Caco-2 (cell line): ENCODE measurements at regions of chr3 and their contacts with region 1.

Region 1: DNA sequence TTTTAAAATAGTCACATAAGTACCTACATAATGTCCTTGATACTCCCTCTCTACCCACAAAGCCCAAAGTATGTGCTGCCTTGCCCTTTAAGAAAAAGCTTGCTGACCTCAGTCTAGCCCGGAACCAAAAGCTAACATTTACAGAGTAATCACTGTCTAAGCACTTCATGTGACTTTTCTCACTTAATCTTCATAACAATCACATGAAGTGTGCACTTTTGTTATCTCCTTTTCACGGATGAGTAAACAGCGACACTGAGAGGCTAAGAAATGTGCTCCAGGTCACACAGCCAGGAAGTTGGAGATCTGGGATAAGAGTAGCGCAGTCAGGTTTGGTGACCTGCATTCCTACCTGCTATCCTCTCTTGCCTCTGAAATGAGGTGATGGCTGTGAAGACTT is 194.0 kb downstream of the ITPR1 start:
- DNase-seq: peak; percentile 42 to 52
- H3K4me3 ChIP-seq: no peak overlapping the region
- H3K4me3 Mint-ChIP-seq: no peak overlapping the region
- H3K27ac Mint-ChIP-seq: no peak overlapping the region
- H3K4me1 ChIP-seq: 0 out of 2 replicates have a peak, but pooled peaks cover 5% of the 10 kb centered on the region
- H3K4me1 Mint-ChIP-seq: peaks cover 7% of the 10 kb centered on the region
- H3K27me3 ChIP-seq: no peaks in the 10 kb centered on the region; the same call in 1 of the 2 replicates
- H3K27me3 Mint-ChIP-seq: no peaks in the 10 kb centered on the region
- CTCF ChIP-seq: no peak

Region 2: GRCh38 chr3:4303187-4304123 is 383.7 kb before region 1 on chr3 and contains the start of gene SETMAR:
- CTCF ChIA-PET with region 1: no interaction called
- POLR2A ChIA-PET with region 1: no interaction called
- intact Hi-C with region 1: no loop called
- DNase-seq: peak; percentile 86 to 89
- H3K4me3 ChIP-seq: peak within 1 kb of the TSS; percentile 81
- H3K4me3 Mint-ChIP-seq: peak within 1 kb of the TSS; percentile 94
- H3K27ac Mint-ChIP-seq: peak within 1 kb of the TSS; percentile 95
- H3K4me1 ChIP-seq: peaks cover 17% of the 10 kb centered on the region
- H3K4me1 Mint-ChIP-seq: peaks cover 16% of the 10 kb centered on the region
- H3K27me3 ChIP-seq: no peaks in the 10 kb centered on the region
- H3K27me3 Mint-ChIP-seq: no peaks in the 10 kb centered on the region
- CTCF ChIP-seq: no peak
- total RNA-seq, gene SETMAR: 11.7 and 11.8 TPM in 2 replicates

Region 3: GRCh38 chr3:4644951-4645350 is 42.2 kb before region 1 on chr3:
- CTCF ChIA-PET with region 1: no interaction called
- POLR2A ChIA-PET with region 1: no interaction called
- intact Hi-C with region 1: no loop called
- DNase-seq: no peak
- H3K4me3 ChIP-seq: no peak overlapping the region
- H3K4me3 Mint-ChIP-seq: no peak overlapping the region
- H3K27ac Mint-ChIP-seq: no peak overlapping the region
- H3K4me1 ChIP-seq: no peaks in the 10 kb centered on the region
- H3K4me1 Mint-ChIP-seq: no peaks in the 10 kb centered on the region
- H3K27me3 ChIP-seq: no peaks in the 10 kb centered on the region
- H3K27me3 Mint-ChIP-seq: no peaks in the 10 kb centered on the region
- CTCF ChIP-seq: no peak

Region 4: DNA sequence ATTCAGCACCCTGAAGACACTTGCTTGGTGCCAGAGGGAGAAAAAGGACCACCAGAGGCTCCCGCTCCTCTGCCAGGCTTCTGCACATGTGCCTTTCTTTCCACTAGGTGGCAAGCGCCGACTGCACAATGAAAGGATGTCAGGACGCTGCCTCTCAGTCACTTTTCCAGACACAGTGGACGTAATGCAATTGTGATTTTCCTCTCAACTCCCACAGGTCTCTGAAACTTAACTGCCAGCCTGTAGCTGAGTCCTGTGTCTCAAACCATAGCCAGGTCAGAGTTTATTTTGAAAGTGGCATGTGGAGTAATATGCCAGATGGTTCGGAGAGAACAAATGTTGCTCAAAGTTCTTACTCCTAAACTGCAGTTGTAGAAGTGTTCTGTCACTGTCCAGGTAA is 31.1 kb before region 1 on chr3:
- CTCF ChIA-PET with region 1: no interaction called
- POLR2A ChIA-PET with region 1: no interaction called
- intact Hi-C with region 1: loop called (anchors 1 kb)
- DNase-seq: peak; percentile 72 to 76
- H3K4me3 ChIP-seq: no peak overlapping the region
- H3K4me3 Mint-ChIP-seq: no peak overlapping the region
- H3K27ac Mint-ChIP-seq: no peak overlapping the region
- H3K4me1 ChIP-seq: no peaks in the 10 kb centered on the region
- H3K4me1 Mint-ChIP-seq: no peaks in the 10 kb centered on the region
- H3K27me3 ChIP-seq: no peaks in the 10 kb centered on the region
- H3K27me3 Mint-ChIP-seq: no peaks in the 10 kb centered on the region
- CTCF ChIP-seq: peak; percentile 87 to 96